ENCODE measurements at regions of chr1 and their contacts with region 1.

Region 1: GRCh38 chr1:152962866-152963430 is 7.5 kb upstream of the SPRR4 start:
- DNase-seq: peak; percentile 32 to 92
- H3K4me3 ChIP-seq: no peak overlapping the region
- H3K27ac ChIP-seq: peak overlapping the region; percentile 33; the same call in 1 of the 2 replicates
- H3K4me1 ChIP-seq: peaks cover 39% of the 10 kb centered on the region
- H3K27me3 ChIP-seq: no peaks in the 10 kb centered on the region
- CTCF ChIP-seq: no peak

Region 2: DNA sequence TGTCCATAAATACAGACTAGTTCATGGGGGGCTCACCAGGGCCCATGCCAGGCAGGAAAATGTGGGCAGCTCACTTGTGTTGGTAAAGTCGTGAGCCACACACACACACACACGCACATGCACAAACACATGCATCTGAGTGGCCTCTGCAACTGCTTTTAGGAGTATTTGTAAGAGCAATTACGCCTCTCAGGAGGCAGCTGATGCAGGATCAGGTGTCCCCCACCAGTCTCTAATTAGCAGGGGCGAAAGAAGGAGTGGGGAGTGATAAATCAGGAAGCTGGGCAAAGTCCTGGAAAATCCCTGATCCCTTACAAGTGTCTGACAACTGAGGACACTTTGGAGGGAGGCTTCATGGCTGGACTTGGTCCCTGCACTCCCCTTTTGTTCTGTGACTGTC is 60.3 kb before region 1 on chr1:
- CTCF ChIA-PET with region 1: no interaction called
- POLR2A ChIA-PET with region 1: no interaction called
- intact Hi-C with region 1: no loop called
- DNase-seq: no peak
- H3K4me3 ChIP-seq: no peak overlapping the region
- H3K27ac ChIP-seq: no peak overlapping the region
- H3K4me1 ChIP-seq: peaks cover 25% of the 10 kb centered on the region
- H3K27me3 ChIP-seq: no peaks in the 10 kb centered on the region
- CTCF ChIP-seq: no peak

Region 3: GRCh38 chr1:152983743-152984142 is 20.8 kb after region 1 on chr1 and contains the start of gene SPRR1A:
- CTCF ChIA-PET with region 1: no interaction called
- POLR2A ChIA-PET with region 1: no interaction called
- intact Hi-C with region 1: no loop called
- DNase-seq: peak; percentile 41 to 94
- H3K4me3 ChIP-seq: peak within 1 kb of the TSS; percentile 23; the same call in 1 of the 2 replicates
- H3K27ac ChIP-seq: peak within 1 kb of the TSS; percentile 76
- H3K4me1 ChIP-seq: peaks cover 32% of the 10 kb centered on the region
- H3K27me3 ChIP-seq: no peaks in the 10 kb centered on the region
- CTCF ChIP-seq: no peak
- total RNA-seq, gene SPRR1A: not detected in 2 replicates

Region 4: DNA sequence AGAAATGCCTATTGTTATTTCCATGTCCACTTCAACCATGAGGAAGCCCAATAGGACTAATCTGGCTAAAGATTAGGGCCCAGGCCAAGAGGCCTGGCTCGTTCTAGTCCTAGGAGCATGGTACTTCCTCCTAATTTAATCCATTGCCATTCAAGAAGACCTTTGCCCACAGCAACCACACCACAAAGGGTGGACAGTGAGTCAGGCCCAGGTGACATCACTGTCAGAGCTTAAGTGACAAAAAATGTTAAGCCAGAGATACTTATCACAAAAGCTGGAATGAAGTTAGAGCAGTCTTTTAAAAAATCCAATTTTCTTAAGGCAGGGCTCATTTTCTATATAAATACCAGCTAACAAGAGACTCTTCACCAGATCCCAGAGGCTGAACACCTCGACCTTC is 38.4 kb after region 1 on chr1 and contains the start of gene SPRR3:
- CTCF ChIA-PET with region 1: interaction called, 3 read pairs
- POLR2A ChIA-PET with region 1: no interaction called
- intact Hi-C with region 1: loop called (anchors 1 kb)
- DNase-seq: peak; percentile 54 to 92
- H3K4me3 ChIP-seq: no peak within 1 kb of the TSS
- H3K27ac ChIP-seq: peak within 1 kb of the TSS; percentile 43
- H3K4me1 ChIP-seq: peaks cover 35% of the 10 kb centered on the region
- H3K27me3 ChIP-seq: no peaks in the 10 kb centered on the region
- CTCF ChIP-seq: no peak
- total RNA-seq, gene SPRR3: 0.57 TPM in 1 of 2 replicates, not detected in the other